CD8-positive, alpha-beta T cell (primary cell): ENCODE measurements at regions of chr13 and their contacts with region 1.

Region 1: DNA sequence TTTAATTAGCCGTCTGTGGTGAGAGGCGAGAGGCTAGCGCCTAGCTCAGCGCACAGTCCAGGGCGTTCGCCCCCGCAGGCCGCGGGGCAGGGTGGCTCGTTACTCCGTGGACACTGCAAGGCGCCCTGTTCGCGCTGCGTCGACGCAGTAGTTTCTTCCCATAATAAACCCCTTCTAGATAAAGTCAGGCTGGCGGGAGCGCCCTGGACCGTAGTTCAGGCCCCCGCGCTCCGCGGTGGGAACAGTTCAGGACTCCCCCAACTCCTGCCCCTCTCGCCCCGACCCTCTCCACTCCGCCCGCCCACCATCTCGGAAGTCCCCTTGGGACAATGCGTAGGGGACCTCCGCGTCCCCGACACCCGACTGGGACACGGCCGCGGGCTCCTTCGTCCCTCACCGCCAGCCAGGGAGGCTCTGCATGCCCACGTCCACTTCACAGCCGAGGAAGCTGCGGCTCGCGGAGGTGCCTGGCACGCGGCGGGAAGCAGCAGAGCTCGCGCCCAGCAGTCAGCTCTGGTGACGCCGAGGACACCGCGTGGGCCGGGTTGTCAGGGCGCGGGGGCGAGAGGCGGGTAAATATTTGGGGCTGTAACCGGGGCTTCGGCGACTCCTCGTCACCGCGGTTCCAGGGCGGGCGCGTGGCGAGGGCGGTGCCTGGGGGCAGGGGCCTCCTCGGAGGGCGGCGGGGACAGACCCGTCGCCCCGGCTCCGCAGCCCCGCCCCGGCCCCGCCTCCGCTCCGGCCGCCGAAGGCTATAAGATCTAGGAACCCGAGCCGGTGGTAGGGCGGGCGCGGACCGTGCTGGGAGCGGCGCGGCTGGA is at the start of gene RGCC:
- DNase-seq: peak; percentile 84 to 98 (median 94)
- ATAC-seq: peak; percentile 75
- H3K4me3 ChIP-seq: peak within 1 kb of the TSS; percentile 66 to 87
- H3K4me3 Mint-ChIP-seq: peak within 1 kb of the TSS; percentile 93
- H3K27ac ChIP-seq: peak within 1 kb of the TSS; percentile 85 to 93
- H3K27ac Mint-ChIP-seq: peak within 1 kb of the TSS; percentile 94
- H3K4me1 ChIP-seq: peaks cover 27% of the 10 kb centered on the region
- H3K4me1 Mint-ChIP-seq: peaks cover 40% of the 10 kb centered on the region
- H3K27me3 ChIP-seq: no peaks in the 10 kb centered on the region
- H3K27me3 Mint-ChIP-seq: no peaks in the 10 kb centered on the region
- CTCF ChIP-seq: no peak
- total RNA-seq, gene RGCC: 578 to 581 TPM

Region 2: DNA sequence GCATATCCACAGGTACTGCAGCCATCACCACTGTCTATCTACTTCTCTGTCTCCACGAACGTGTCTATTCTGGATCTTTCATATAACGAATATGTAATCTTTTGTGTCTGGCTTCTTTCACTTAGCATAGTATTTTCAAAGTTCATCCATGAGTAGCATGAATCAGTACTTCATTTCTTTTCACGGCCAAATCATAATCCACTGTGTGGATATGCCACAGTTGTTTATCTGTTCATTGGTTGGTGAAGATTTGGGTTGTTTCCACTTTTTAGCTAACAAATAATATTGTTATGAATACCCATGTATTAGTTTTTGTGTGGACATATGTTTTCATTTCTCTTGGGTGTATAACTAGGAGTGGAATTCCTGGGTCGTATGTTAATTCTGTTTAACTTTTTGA is 14.8 kb after region 1 on chr13:
- CTCF ChIA-PET with region 1: interaction called, 28 read pairs
- POLR2A ChIA-PET with region 1: interaction called, 5 read pairs
- intact Hi-C with region 1: no loop called
- DNase-seq: peak in 1 of 9 experiments; percentile 18
- ATAC-seq: peak; percentile 19
- H3K4me3 ChIP-seq: no peak overlapping the region
- H3K4me3 Mint-ChIP-seq: no peak overlapping the region
- H3K27ac ChIP-seq: no peak overlapping the region
- H3K27ac Mint-ChIP-seq: peak overlapping the region; percentile 63
- H3K4me1 ChIP-seq: peaks cover 44% of the 10 kb centered on the region
- H3K4me1 Mint-ChIP-seq: peaks cover 72% of the 10 kb centered on the region
- H3K27me3 ChIP-seq: no peaks in the 10 kb centered on the region
- H3K27me3 Mint-ChIP-seq: no peaks in the 10 kb centered on the region
- CTCF ChIP-seq: no peak

Region 3: GRCh38 chr13:41502673-41503072 is 45.7 kb after region 1 on chr13:
- CTCF ChIA-PET with region 1: interaction called, 89 read pairs
- POLR2A ChIA-PET with region 1: interaction called, 4 read pairs
- intact Hi-C with region 1: loop called in 1 of 2 experiments (anchors 1 kb)
- DNase-seq: peak in 5 of 9 experiments; percentile 23 to 55 (median 44)
- ATAC-seq: peak; percentile 65
- H3K4me3 ChIP-seq: no peak overlapping the region
- H3K4me3 Mint-ChIP-seq: peak overlapping the region; percentile 29
- H3K27ac ChIP-seq: no peak overlapping the region
- H3K27ac Mint-ChIP-seq: peak overlapping the region; percentile 81
- H3K4me1 ChIP-seq: peaks cover 39% of the 10 kb centered on the region
- H3K4me1 Mint-ChIP-seq: peaks cover 40% of the 10 kb centered on the region
- H3K27me3 ChIP-seq: peaks cover 0 to 2% of the 10 kb centered on the region in 2 experiments
- H3K27me3 Mint-ChIP-seq: no peaks in the 10 kb centered on the region
- CTCF ChIP-seq: no peak

Region 4: GRCh38 chr13:41652727-41653361 is 195.9 kb after region 1 on chr13:
- CTCF ChIA-PET with region 1: interaction called, 38 read pairs
- POLR2A ChIA-PET with region 1: interaction called, 7 read pairs
- intact Hi-C with region 1: no loop called
- DNase-seq: peak in 7 of 9 experiments; percentile 24 to 67 (median 43)
- ATAC-seq: peak; percentile 56
- H3K4me3 ChIP-seq: no peak overlapping the region
- H3K4me3 Mint-ChIP-seq: no peak overlapping the region
- H3K27ac ChIP-seq: no peak overlapping the region
- H3K27ac Mint-ChIP-seq: no peak overlapping the region
- H3K4me1 ChIP-seq: no peaks in the 10 kb centered on the region
- H3K4me1 Mint-ChIP-seq: peaks cover 11% of the 10 kb centered on the region
- H3K27me3 ChIP-seq: no peaks in the 10 kb centered on the region
- H3K27me3 Mint-ChIP-seq: no peaks in the 10 kb centered on the region
- CTCF ChIP-seq: peak; percentile 64